Activated CD8-positive, alpha-beta T cell treated with anti-CD3 and anti-CD28 coated beads for 36 hours (primary cell): ENCODE measurements at regions of chr3 and their contacts with region 1.

Region 1: DNA sequence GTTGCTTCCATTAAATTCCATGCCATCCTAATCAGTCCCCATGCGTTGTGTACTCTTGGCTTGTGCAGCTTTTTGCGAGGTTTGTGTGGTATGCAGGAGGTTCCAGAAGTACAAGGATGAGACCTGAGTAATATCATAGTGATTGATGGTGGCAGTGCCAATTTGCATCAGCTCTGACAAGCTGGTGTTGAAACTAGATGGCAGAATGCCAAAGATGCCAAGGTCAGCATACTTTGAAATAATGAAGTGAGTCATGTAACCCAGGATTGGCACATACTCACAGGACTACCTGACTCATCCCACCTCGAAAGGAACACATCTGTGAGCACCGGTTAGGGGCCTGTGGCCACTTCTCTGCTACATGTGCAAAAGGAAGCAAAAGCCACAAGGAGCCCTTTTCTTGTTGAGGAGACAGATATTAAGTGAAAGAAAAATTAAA is 14.3 kb downstream of the KAT2B start:
- DNase-seq: peak; percentile 90
- ATAC-seq: peak; percentile 89
- H3K4me3 Mint-ChIP-seq: no peak overlapping the region
- H3K27ac Mint-ChIP-seq: no peak overlapping the region
- H3K4me1 Mint-ChIP-seq: peaks cover 23% of the 10 kb centered on the region
- H3K27me3 Mint-ChIP-seq: no peaks in the 10 kb centered on the region
- CTCF ChIP-seq: no peak

Region 2: DNA sequence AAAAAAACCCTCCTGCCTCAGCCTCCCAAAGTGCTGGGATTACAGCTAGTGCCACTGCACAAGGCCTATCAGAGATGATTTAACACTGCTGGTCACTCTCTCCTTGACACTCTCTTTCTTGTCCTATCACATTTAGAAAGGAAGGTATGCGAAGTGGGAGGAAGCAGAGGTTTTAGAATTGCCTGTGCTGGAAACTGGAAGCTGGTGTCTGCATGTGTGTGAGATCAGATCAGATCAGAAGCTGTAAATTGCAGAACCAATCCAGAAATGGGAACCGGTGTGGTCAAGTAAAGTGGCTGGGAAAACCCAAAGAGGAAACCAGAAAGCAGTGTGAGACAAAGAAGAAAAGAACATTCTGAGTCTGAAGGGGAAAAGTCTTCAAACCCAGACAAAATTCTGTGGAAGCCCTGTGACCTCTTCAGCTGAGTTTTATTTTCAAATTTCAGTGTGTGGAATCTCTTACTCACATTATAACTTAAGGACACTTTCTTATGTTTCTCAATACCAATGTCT is 123.3 kb before region 1 on chr3:
- CTCF ChIA-PET with region 1: no interaction called
- POLR2A ChIA-PET with region 1: no interaction called
- intact Hi-C with region 1: loop called (anchors 5 kb)
- DNase-seq: peak; percentile 67
- ATAC-seq: peak; percentile 75
- H3K4me3 Mint-ChIP-seq: peak overlapping the region; percentile 11
- H3K27ac Mint-ChIP-seq: peak overlapping the region; percentile 84
- H3K4me1 Mint-ChIP-seq: peaks cover 33% of the 10 kb centered on the region
- H3K27me3 Mint-ChIP-seq: peaks cover 11% of the 10 kb centered on the region
- CTCF ChIP-seq: no peak